ENCODE measurements at regions of chr2 and their contacts with region 1.

Region 1: DNA sequence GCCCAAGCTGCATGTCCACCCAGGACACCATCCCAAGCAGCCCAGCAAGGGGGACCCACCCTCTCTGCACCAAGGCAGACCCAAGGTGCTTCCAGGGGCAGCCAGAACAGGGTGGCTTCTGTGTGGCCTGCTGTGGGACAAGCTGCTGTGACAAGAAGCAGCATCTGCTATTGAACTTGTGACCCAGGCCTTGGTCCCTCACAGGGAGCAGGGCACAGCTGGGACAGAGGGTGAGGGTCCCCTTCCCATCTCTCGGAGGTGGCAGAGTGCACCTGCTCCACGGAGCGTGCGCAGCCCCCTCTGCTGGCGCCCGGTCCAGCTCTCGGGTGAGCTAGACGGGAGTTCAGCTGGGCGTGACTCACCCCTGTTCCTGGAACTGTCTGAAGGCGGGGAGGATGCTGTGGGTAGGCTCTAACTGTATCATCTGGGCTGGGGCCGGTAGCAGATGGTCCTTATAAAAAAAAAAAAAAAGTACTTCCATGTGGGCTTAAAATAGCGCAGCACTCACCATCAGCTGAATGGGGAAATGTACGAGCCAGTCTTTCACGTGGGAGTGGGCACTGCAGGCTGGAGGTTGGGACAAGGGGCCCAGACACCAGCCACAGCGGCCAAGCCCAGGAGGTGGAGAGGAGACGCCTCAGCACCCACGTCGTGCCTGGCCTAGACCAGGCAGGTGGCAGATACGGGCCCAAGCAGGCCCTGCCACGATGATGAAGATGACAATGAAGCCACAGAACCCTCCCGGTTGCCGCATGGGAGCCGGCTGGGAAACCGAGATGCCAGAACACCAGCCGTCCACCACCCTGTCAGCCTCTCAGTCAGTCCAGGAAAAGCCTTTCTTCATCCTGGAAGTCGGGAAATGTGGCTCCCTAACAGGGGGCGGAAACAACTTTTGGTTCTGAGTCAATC is 136.8 kb upstream of the ID2 start:
- DNase-seq: peak; percentile 84
- H3K4me3 Mint-ChIP-seq: no peak overlapping the region
- H3K27ac Mint-ChIP-seq: peak overlapping the region; percentile 99
- H3K4me1 Mint-ChIP-seq: peaks cover 80% of the 10 kb centered on the region
- H3K27me3 Mint-ChIP-seq: no peaks in the 10 kb centered on the region

Region 2: DNA sequence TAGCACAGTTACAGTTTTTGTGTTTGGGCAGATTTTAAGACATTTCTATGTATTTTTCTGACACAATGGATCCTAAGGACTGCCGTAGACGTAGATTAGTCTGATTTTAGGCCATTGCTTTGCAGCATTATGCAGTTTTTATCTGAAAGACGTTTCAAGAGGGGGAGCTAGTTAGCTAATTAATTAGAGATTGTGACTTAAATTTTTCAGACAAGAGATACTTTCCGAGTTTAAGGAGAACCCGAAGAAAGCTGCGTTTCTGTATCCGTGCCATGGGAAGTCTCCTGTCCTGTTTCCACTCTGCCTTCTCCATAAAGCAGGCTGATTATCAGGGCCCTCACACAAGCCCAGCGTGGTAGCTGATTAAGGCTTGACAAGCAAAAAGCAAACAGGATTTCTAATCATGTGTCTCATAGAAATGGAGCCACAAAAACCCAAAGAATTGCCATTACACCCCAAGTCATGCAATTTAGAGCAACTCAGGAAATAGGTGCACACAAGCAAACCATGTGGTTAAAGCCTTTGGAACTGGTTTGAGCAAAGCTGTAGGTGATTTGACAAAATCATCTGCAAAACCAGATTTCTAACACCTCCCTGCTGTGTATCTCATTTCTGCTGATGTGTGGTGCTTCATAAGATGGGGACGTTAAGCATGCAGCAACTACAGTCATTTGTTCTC is 819.7 kb before region 1 on chr2:
- intact Hi-C with region 1: loop called (anchors 5 kb)
- DNase-seq: peak; percentile 51
- H3K4me3 Mint-ChIP-seq: peak overlapping the region; percentile 89
- H3K27ac Mint-ChIP-seq: peak overlapping the region; percentile 90
- H3K4me1 Mint-ChIP-seq: peaks cover 58% of the 10 kb centered on the region
- H3K27me3 Mint-ChIP-seq: no peaks in the 10 kb centered on the region

Region 3: DNA sequence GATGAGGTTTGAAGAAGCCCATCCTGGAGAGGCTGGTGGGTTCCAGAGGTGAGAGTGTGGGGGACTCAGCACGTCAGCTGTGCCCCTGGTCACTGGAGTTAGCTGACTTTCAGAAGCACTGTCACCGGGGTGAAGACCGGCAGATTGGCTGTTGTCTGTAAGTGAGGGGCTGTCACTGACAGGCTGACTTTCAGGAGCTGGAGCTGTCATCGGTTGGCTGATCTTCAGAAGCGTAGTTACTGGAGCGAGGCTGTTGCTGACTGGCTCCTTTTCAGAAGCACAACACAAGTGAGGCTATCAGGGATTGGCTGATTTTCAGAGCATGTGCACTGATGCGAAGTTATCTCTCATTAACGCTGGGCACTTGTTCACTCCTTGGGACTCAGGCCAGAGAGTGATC is 601.6 kb before region 1 on chr2:
- intact Hi-C with region 1: loop called (anchors 1 kb)
- DNase-seq: no peak
- H3K4me3 Mint-ChIP-seq: no peak overlapping the region
- H3K27ac Mint-ChIP-seq: no peak overlapping the region
- H3K4me1 Mint-ChIP-seq: peaks cover 22% of the 10 kb centered on the region
- H3K27me3 Mint-ChIP-seq: no peaks in the 10 kb centered on the region

Region 4: GRCh38 chr2:8303322-8303832 is 241.7 kb before region 1 on chr2:
- intact Hi-C with region 1: loop called (anchors 1 kb)
- DNase-seq: peak; percentile 82
- H3K4me3 Mint-ChIP-seq: peak overlapping the region; percentile 49
- H3K27ac Mint-ChIP-seq: peak overlapping the region; percentile 47
- H3K4me1 Mint-ChIP-seq: peaks cover 81% of the 10 kb centered on the region
- H3K27me3 Mint-ChIP-seq: no peaks in the 10 kb centered on the region

Region 5: GRCh38 chr2:8488001-8488738 is 56.9 kb before region 1 on chr2:
- intact Hi-C with region 1: loop called (anchors 1 kb)
- DNase-seq: no peak
- H3K4me3 Mint-ChIP-seq: peak overlapping the region; percentile 6
- H3K27ac Mint-ChIP-seq: peak overlapping the region; percentile 2
- H3K4me1 Mint-ChIP-seq: peaks cover 40% of the 10 kb centered on the region
- H3K27me3 Mint-ChIP-seq: peaks cover 6% of the 10 kb centered on the region

Region 6: DNA sequence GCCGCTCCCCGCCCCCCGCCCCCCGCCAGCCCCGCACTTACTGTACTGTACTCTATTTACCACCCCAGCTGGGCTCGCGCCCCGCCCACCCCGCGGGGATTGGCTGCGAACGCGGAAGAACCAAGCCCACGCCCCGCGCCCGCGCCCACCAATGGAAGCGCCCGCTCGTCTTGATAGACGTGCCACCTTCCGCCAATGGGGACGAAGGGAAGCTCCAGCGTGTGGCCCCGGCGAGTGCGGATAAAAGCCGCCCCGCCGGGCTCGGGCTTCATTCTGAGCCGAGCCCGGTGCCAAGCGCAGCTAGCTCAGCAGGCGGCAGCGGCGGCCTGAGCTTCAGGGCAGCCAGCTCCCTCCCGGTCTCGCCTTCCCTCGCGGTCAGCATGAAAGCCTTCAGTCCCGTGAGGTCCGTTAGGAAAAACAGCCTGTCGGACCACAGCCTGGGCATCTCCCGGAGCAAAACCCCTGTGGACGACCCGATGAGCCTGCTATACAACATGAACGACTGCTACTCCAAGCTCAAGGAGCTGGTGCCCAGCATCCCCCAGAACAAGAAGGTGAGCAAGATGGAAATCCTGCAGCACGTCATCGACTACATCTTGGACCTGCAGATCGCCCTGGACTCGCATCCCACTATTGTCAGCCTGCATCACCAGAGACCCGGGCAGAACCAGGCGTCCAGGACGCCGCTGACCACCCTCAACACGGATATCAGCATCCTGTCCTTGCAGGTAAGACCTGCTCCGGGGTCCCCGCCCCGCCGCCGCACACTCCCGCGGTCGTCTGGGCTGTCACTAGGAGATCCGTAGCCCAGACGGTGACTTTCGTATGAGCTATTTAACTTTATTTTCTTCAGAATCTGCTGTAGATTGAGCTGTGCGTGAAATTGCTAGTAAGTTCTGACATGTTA is 137.0 kb after region 1 on chr2 and contains the start of gene ID2:
- intact Hi-C with region 1: loop called (anchors 1 kb)
- DNase-seq: peak; percentile 99
- H3K4me3 Mint-ChIP-seq: peak within 1 kb of the TSS; percentile 100
- H3K27ac Mint-ChIP-seq: peak within 1 kb of the TSS; percentile 98
- H3K4me1 Mint-ChIP-seq: peaks cover 28% of the 10 kb centered on the region
- H3K27me3 Mint-ChIP-seq: peaks cover 10% of the 10 kb centered on the region
- total RNA-seq, gene ID2: 423 and 431 TPM in 2 replicates

Measured in activated T-helper 2 cell treated with anti-CD3 and anti-CD28 coated beads, Interferon-gamma antibody, Interleukin-2, Interleukin-4, amounts not matched to agents 10 μg/mL and 5 μg/mL and 100 μg/mL, durations not matched to agents 14 hours and 24 hours and 36 hours (primary cell).